Prostate gland (tissue), 2 donors: ENCODE measurements at regions of chr6 and their contacts with region 1.

Region 1: DNA sequence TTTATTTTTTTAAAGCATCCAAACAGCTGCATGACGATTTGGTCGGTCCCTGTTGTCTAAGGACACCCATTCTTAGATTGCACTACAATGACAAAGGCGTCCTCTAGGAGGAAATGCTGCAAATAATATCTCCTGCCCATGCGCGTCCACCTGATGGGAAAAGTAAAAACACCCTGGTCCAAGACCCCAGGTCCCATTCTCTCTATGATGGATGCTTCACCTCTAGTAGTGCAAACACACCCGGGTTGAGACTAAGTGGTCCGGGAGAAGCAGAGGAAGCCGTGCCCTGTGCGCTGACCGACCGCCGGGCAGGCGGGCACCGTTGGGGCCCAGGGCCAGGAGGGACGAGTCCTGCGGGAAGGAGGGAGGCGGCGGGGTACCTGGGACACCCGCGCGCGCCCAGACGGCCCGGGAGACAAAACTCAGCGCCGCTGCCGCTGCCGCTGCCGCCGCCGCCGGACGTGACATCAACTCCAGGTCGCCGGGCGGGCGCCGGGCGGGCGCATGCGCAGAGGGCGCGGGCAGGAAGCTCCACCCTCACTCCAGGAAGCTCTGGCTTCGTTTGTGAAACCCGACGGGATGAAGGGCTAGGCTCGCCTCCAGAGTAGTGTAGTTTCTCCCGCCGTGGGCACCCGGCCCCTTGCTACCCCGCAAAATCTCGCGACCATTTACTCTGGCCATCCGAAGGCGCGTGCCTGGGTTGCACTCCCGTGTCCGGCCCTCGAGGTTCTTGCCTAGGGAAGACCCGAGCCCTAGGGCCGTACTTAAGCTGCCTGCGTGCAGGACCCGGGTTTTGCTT is at the start of gene TBC1D7:
- DNase-seq: peak; percentile 89
- H3K4me3 ChIP-seq: peak within 1 kb of the TSS; percentile 74
- H3K27ac ChIP-seq: peak within 1 kb of the TSS; percentile 89 to 90
- H3K4me1 ChIP-seq: no peaks in the 10 kb centered on the region
- H3K27me3 ChIP-seq: no peaks in the 10 kb centered on the region
- CTCF ChIP-seq: peak in 2 of 4 experiments; percentile 28
- POLR2A ChIP-seq: peak; percentile 88
- total RNA-seq, gene TBC1D7: 11.6 to 27.9 TPM

Region 2: DNA sequence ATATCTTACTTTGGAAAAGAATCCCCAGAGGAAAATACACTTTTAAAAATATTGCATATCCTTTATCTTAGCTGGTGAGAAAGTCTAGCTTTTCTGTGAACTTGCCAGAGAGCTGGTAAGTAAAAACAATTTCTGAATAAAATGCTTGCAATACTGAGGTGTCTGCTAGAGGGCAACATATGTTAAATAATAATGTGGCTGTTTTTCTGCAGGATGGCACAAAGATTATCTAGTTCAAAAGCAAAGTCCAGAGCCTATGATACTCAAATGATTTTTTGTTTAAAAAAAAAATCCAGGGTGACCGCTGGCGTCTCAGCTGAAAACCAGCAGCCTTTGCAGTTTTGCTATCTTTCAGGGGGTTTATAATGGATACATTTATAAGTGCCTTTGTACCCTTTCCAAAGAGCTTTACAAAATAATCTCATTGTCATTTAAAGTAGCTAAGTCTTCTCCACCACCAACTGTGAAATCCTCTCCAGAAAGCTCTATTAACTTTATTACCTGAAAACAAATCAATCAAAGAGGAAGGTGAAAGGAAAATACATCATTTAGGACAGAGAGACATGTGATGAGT is 416.8 kb before region 1 on chr6:
- intact Hi-C with region 1: loop called (anchors 2 kb)
- DNase-seq: peak; percentile 22
- H3K4me3 ChIP-seq: no peak overlapping the region
- H3K27ac ChIP-seq: no peak overlapping the region
- H3K4me1 ChIP-seq: no peaks in the 10 kb centered on the region
- H3K27me3 ChIP-seq: no peaks in the 10 kb centered on the region
- CTCF ChIP-seq: peak in 3 of 4 experiments; percentile 42 to 76 (median 67)
- POLR2A ChIP-seq: no peak

Region 3: GRCh38 chr6:13194852-13195251 is 133.4 kb before region 1 on chr6:
- intact Hi-C with region 1: loop called (anchors 5 kb)
- DNase-seq: peak; percentile 13
- H3K4me3 ChIP-seq: no peak overlapping the region
- H3K27ac ChIP-seq: no peak overlapping the region
- H3K4me1 ChIP-seq: no peaks in the 10 kb centered on the region
- H3K27me3 ChIP-seq: no peaks in the 10 kb centered on the region
- CTCF ChIP-seq: peak in 3 of 4 experiments; percentile 21 to 46 (median 29)
- POLR2A ChIP-seq: no peak

Region 4: GRCh38 chr6:13511913-13512717 is 183.8 kb after region 1 on chr6:
- intact Hi-C with region 1: no loop called
- DNase-seq: no peak
- H3K4me3 ChIP-seq: no peak overlapping the region
- H3K27ac ChIP-seq: no peak overlapping the region
- H3K4me1 ChIP-seq: no peaks in the 10 kb centered on the region
- H3K27me3 ChIP-seq: no peaks in the 10 kb centered on the region
- CTCF ChIP-seq: no peak
- POLR2A ChIP-seq: no peak